Dendritic cell treated with granulocyte-macrophage colony-stimulating factor and Interleukin-4, amounts not matched to agents 40 ng/mL and 50 ng/mL, for 4 days (primary cell): ENCODE measurements at regions of chr4 and their contacts with region 1.

Region 1: GRCh38 chr4:43651991-43652390 is 759.5 kb downstream of the GRXCR1 start:
- H3K4me3 Mint-ChIP-seq: no peak overlapping the region
- H3K27ac Mint-ChIP-seq: no peak overlapping the region
- H3K4me1 Mint-ChIP-seq: no peaks in the 10 kb centered on the region
- H3K27me3 Mint-ChIP-seq: no peaks in the 10 kb centered on the region

Region 2: DNA sequence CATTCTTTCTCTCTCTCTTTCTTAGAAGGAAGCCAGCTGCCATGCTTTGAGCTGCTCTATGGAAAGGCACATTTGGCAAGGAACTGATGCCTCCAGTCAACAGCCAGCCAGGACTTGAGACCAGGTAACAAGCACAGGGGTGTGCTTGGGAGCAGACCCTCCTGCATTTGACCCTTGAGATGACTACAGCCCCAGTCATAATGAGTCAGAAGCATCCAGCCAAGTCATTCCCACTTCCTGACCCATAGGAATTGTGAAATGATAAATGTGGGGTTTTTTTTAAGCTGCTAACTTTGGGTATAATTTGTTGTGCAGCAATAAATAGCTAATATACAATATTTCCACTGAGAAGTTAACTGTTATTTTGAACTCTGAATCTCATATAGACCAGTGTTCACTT is 312.6 kb before region 1 on chr4:
- intact Hi-C with region 1: no loop called
- H3K4me3 Mint-ChIP-seq: no peak overlapping the region
- H3K27ac Mint-ChIP-seq: no peak overlapping the region
- H3K4me1 Mint-ChIP-seq: no peaks in the 10 kb centered on the region
- H3K27me3 Mint-ChIP-seq: no peaks in the 10 kb centered on the region

Region 3: GRCh38 chr4:43690116-43690515 is 38.1 kb after region 1 on chr4:
- intact Hi-C with region 1: no loop called
- H3K4me3 Mint-ChIP-seq: no peak overlapping the region
- H3K27ac Mint-ChIP-seq: no peak overlapping the region
- H3K4me1 Mint-ChIP-seq: no peaks in the 10 kb centered on the region
- H3K27me3 Mint-ChIP-seq: no peaks in the 10 kb centered on the region

Region 4: DNA sequence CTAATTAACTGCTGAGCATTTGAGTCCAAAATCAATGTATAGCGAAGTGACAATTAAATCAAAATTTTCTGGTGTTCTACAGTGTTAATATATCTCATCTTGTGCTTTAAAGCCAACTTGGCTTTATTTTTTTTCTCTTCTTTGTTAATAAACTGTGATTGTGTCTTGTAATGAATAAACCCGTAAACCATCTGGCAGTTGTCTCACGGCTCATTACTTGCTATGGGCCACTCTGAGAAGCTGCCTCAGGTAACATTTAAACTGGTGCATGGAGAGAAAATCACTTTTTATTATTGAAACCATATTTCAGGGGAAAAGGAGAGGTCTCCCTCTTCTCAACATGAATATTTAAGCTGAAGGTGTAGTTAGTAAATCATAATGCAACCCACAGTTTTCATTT is 102.6 kb after region 1 on chr4:
- intact Hi-C with region 1: no loop called
- H3K4me3 Mint-ChIP-seq: no peak overlapping the region
- H3K27ac Mint-ChIP-seq: no peak overlapping the region
- H3K4me1 Mint-ChIP-seq: no peaks in the 10 kb centered on the region
- H3K27me3 Mint-ChIP-seq: no peaks in the 10 kb centered on the region

Region 5: DNA sequence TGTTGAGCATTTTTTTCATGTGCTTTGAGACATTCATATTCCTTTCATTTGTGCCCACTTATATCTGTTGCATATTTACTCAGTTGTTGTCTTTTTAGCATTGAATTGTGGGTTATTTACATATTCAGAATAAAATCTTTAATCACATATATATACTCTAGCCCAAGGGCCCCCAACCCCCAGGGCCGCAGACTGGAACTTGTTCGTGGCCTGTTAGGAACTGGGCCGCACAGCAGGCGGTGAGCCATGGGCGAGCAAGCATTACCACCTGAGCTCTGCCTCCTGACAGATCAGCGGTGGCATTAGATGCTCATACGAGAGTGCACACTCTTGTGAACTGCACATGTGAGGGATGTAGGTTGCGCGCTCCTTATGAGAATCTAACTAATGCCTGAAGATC is 316.0 kb after region 1 on chr4:
- intact Hi-C with region 1: loop called (anchors 5 kb)
- H3K4me3 Mint-ChIP-seq: no peak overlapping the region
- H3K27ac Mint-ChIP-seq: no peak overlapping the region
- H3K4me1 Mint-ChIP-seq: no peaks in the 10 kb centered on the region
- H3K27me3 Mint-ChIP-seq: no peaks in the 10 kb centered on the region